Activated CD4-positive, alpha-beta T cell treated with anti-CD3 and anti-CD28 coated beads for 36 hours (primary cell): ENCODE measurements at regions of chr10 and their contacts with region 1.

Region 1: GRCh38 chr10:13327534-13327933 is 20.6 kb downstream of the SEPHS1 start:
- DNase-seq: no peak
- ATAC-seq: no peak
- H3K4me3 Mint-ChIP-seq: no peak overlapping the region
- H3K27ac Mint-ChIP-seq: no peak overlapping the region
- H3K4me1 Mint-ChIP-seq: no peaks in the 10 kb centered on the region
- H3K27me3 Mint-ChIP-seq: no peaks in the 10 kb centered on the region

Region 2: GRCh38 chr10:13340626-13341376 is 13.3 kb after region 1 on chr10:
- CTCF ChIA-PET with region 1: no interaction called
- POLR2A ChIA-PET with region 1: interaction called, 3 read pairs
- intact Hi-C with region 1: loop called (anchors 2 kb)
- DNase-seq: peak; percentile 45
- ATAC-seq: peak; percentile 79
- H3K4me3 Mint-ChIP-seq: peak overlapping the region; percentile 39
- H3K27ac Mint-ChIP-seq: no peak overlapping the region
- H3K4me1 Mint-ChIP-seq: peaks cover 51% of the 10 kb centered on the region
- H3K27me3 Mint-ChIP-seq: no peaks in the 10 kb centered on the region

Region 3: DNA sequence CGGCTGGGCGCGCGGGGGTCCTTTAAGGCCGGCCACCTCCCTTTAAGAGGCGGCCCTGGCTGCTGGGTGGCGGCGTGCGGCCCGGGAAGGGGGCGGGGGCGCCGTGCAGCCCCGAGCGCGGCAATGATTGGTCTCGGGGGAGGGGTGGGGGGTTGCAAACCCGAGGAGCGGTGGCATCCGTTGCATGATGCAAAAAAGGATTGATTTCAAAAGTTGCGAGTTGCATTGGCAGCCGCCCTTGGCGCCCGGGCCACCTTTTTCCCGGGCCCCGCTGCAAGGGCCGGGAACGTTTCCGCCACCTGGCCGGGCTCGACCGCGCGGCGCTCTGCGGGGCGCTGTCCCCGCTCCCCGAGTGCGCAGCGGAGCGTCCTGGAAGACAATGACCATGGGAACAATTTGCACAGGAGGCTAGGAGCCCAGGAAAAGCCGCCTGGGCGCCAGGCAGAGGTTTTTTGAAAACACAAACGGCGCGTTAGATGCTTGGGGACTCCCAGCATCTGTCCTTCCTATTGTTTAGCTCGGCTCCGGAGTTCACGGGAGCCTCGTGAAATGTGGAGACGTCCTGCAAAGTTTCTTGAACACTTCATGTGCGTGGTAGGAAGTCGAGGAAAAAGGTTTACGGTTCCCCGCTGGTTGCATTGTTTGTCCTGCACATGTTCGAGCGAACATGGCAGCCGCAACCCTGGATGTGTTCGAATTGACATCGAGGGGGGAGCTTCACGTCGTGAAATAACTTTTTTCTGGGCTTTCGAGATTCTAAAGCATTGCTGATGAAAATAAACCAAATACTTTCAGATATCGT is 20.9 kb after region 1 on chr10 and contains the start of gene SEPHS1:
- CTCF ChIA-PET with region 1: no interaction called
- POLR2A ChIA-PET with region 1: interaction called, 3 read pairs
- intact Hi-C with region 1: loop called in 1 of 2 experiments (anchors 2 kb)
- DNase-seq: peak; percentile 93
- ATAC-seq: peak; percentile 77
- H3K4me3 Mint-ChIP-seq: peak within 1 kb of the TSS; percentile 87
- H3K27ac Mint-ChIP-seq: peak within 1 kb of the TSS; percentile 95
- H3K4me1 Mint-ChIP-seq: peaks cover 57% of the 10 kb centered on the region
- H3K27me3 Mint-ChIP-seq: no peaks in the 10 kb centered on the region
- total RNA-seq, gene SEPHS1: 74.5 to 74.7 TPM